Mammary epithelial cell (primary cell): ENCODE measurements at regions of chr16 and their contacts with region 1.

Region 1: DNA sequence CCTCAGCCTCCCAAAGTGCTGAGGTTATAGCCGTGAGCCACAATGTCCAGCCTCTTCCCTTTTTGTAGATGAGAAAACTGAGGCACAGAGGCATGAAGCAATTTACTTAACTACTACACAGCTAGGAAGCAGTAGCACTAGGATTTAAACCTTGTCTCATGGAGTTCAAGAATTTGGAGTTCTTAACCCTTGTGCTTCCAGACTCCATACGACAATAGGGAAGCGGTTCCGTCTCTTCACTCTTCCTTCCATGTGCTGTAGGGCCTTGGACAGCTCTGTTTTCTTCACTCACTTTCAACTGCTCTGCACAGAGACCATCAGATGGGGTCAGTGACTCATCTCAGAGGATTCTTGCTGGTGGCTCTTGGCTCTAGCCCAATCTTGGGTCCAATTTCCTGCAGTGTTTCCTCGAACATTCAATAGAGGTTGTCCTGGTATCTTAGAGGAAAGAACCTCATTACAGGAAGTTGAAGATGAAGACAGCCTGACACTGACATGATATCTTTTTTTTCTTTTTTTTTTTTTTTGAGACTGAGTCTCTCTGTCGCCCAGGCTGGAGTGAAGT is 19.3 kb downstream of the ITGAL start:
- DNase-seq: peak; percentile 62
- H3K4me3 ChIP-seq: no peak overlapping the region
- H3K27ac ChIP-seq: no peak overlapping the region
- H3K4me1 ChIP-seq: peaks cover 16% of the 10 kb centered on the region
- H3K27me3 ChIP-seq: no peaks in the 10 kb centered on the region
- CTCF ChIP-seq: no peak

Region 2: GRCh38 chr16:30472328-30472942 is 19.4 kb before region 1 on chr16 and contains the start of gene ITGAL:
- CTCF ChIA-PET with region 1: no interaction called
- dilution Hi-C with region 1: no loop called
- in situ Hi-C with region 1: no loop called
- intact Hi-C with region 1: loop called (anchors 1 kb)
- DNase-seq: no peak
- H3K4me3 ChIP-seq: no peak within 1 kb of the TSS
- H3K27ac ChIP-seq: no peak within 1 kb of the TSS
- H3K4me1 ChIP-seq: peaks cover 4% of the 10 kb centered on the region
- H3K27me3 ChIP-seq: peaks cover 2% of the 10 kb centered on the region
- CTCF ChIP-seq: no peak
- total RNA-seq, gene ITGAL: not detected

Region 3: DNA sequence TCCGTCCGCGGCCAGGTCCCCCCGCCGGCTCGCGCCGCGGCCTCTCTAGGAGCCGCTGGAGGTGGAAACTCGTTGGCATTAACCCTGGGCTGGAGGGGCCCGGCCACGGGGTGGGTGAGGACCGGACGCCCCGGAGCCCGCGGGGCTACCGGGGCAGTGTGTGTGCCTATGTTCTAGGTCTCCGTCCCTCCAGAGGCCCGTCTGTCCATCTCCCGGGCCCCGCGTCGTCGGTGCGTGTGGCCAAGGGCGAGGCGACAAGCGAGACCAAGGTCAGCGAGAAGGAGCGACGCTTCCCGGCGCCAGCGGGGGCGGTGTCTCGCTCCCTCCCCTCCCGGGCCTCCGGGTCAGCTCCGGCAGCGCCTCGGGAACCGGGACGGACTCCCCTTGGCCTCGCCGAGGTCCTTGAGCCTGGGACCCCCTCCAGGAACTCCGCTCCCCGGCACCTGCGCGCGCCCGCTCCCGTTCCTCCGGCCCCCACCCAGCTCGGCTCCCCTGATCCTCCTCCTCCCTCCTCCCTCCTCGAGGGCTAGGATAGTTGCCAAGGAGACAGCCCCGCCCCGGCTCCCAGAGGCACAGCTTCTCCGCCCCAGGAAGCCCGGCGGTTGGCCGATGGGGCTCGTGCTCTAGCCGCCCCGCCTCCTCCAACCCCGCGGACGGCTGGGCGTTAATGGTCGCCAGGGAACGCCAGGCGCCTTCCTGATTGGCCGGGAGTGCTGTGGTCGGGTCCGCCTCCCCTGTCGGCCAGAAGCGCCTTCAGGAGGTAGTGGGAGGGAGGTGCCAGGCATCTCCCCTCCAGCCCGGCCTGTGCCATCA is 35.2 kb after region 1 on chr16:
- CTCF ChIA-PET with region 1: no interaction called
- dilution Hi-C with region 1: no loop called
- in situ Hi-C with region 1: no loop called
- intact Hi-C with region 1: loop called (anchors 2 kb)
- DNase-seq: peak; percentile 98
- H3K4me3 ChIP-seq: peak overlapping the region; percentile 65 to 96 (median 90)
- H3K27ac ChIP-seq: peak overlapping the region; percentile 88
- H3K4me1 ChIP-seq: peaks cover 18% of the 10 kb centered on the region
- H3K27me3 ChIP-seq: no peaks in the 10 kb centered on the region
- CTCF ChIP-seq: peak in 1 of 2 donors; percentile 42

Region 4: DNA sequence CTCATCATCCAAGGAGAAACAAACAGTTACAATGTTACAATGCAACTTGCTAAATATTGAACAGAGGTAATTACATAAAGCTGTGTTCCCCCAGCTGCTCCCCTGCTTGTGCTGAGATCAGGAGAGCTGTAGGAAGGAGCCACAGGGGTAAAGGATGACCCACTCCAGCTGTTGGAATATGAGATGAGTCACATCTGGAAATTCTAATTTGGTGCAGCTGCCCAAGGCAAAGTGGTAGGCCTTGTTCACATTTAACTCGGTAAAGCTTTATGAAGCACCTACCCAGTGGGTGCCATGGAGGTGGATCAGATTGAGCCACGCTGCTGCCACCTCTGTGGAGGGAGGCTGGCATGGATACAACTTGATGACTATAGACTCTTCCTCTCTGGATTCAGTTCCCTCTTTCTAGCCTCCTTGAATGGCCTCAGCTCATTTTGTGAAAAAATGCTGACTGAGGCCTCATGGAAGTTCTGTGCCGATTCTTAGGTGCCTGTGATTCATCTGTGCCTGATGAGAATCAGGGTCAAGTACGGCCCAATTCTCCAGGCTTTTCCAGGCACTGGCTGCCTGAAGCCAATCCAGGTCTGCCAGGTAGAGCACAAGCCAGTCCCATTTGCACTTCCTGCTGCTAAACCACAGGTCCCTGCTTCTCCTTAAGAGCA is 110.9 kb after region 1 on chr16:
- CTCF ChIA-PET with region 1: interaction called, 10 read pairs
- dilution Hi-C with region 1: no loop called
- in situ Hi-C with region 1: no loop called
- intact Hi-C with region 1: no loop called
- DNase-seq: no peak
- H3K4me3 ChIP-seq: no peak overlapping the region
- H3K27ac ChIP-seq: no peak overlapping the region
- H3K4me1 ChIP-seq: peaks cover 3% of the 10 kb centered on the region
- H3K27me3 ChIP-seq: no peaks in the 10 kb centered on the region
- CTCF ChIP-seq: no peak